H1 (cell line): ENCODE measurements at regions of chr13 and their contacts with region 1.

Region 1: DNA sequence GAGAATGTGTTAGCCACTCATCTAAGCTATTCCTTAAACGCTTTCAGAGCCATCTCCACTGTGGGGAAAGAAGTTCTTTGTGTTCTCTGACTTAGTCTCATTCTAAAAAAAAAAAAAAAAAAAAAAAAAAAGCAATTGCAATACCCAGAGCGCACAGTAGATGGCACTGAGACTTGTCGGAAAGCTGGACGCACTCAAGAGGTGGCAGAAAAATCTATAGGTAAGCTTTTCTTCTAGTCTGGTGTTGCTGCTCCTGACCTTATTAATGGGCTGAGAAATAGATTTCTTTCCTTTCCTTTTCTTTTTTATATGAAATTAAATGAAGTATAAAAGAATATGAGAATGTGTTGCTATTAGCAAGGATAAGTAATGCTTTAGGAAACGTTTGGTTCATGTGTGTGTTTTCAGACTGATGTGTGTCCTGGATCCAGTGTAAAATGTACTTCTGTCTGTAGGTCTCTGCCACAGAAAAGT is 4.7 kb upstream of the GJB2 start:
- DNase-seq: no peak
- H3K4me3 ChIP-seq: no peak overlapping the region
- H3K27ac ChIP-seq: no peak overlapping the region
- H3K4me1 ChIP-seq: peaks cover 0 to 9% (median 3%) of the 10 kb centered on the region in 4 experiments; a peak in 5 of 7 replicates
- H3K27me3 ChIP-seq: peaks cover 28 to 49% (median 45%) of the 10 kb centered on the region in 4 experiments
- CTCF ChIP-seq: peak; percentile 37 to 58 (median 53)
- EP300 ChIP-seq: no peak
- POLR2A ChIP-seq: no peak
- RAD21 ChIP-seq: peak; percentile 74 to 77

Region 2: GRCh38 chr13:20230913-20231838 is 33.8 kb after region 1 on chr13:
- CTCF ChIA-PET with region 1: interaction called, 20 read pairs
- POLR2A ChIA-PET with region 1: no interaction called
- DNase-seq: peak in 1 of 2 experiments; percentile 54
- H3K4me3 ChIP-seq: peak overlapping the region; percentile 16 to 61 (median 36); a peak in 7 of 8 replicates
- H3K27ac ChIP-seq: no peak overlapping the region
- H3K4me1 ChIP-seq: peaks cover 0 to 7% (median 2%) of the 10 kb centered on the region in 4 experiments; a peak in 4 of 7 replicates
- H3K27me3 ChIP-seq: peaks cover 30 to 55% (median 47%) of the 10 kb centered on the region in 4 experiments
- CTCF ChIP-seq: no peak
- EP300 ChIP-seq: no peak
- POLR2A ChIP-seq: no peak
- RAD21 ChIP-seq: no peak

Region 3: GRCh38 chr13:20294497-20294896 is 97.1 kb after region 1 on chr13:
- CTCF ChIA-PET with region 1: interaction called, 10 read pairs
- POLR2A ChIA-PET with region 1: no interaction called
- DNase-seq: no peak
- H3K4me3 ChIP-seq: no peak overlapping the region
- H3K27ac ChIP-seq: no peak overlapping the region
- H3K4me1 ChIP-seq: peaks cover 0 to 2% (median 0%) of the 10 kb centered on the region in 4 experiments; a peak in 1 of 7 replicates
- H3K27me3 ChIP-seq: no peaks in the 10 kb centered on the region
- CTCF ChIP-seq: peak; percentile 54 to 70 (median 65); a peak in 3 of 4 replicates
- EP300 ChIP-seq: no peak
- POLR2A ChIP-seq: no peak
- RAD21 ChIP-seq: peak; percentile 46 to 55

Region 4: DNA sequence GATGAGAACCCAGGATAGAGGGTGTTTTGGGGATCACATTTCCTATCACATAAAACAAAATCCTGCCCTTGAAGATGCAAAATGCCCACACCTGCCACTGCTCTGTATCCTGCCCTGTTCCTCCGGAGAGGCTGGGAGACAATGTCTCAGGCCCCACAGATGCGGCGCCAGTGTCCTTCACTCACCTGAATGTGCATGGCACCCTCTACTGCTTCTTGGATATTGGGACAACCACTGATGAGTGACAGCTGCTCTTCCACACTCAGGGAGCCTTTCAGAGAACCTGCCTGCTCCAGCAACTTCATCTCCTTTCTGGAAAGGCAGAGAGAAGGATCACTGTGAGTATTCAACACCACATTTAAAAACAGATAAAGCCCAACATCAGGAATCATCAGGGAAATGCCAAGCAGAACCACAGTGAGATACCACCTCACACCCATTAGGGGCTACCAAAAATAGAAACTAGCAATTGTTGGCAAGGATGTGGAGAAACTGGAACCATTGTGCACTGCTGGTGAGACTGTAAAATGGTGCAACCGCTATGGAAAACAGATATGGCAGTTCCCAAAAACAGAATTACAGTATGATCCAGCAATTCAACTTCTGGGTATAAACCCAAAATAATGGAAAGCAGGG is 291.9 kb after region 1 on chr13:
- CTCF ChIA-PET with region 1: interaction called, 23 read pairs
- POLR2A ChIA-PET with region 1: no interaction called
- DNase-seq: no peak
- H3K4me3 ChIP-seq: no peak overlapping the region
- H3K27ac ChIP-seq: no peak overlapping the region
- H3K4me1 ChIP-seq: no peaks in the 10 kb centered on the region; a peak in 1 of 7 replicates
- H3K27me3 ChIP-seq: no peaks in the 10 kb centered on the region
- CTCF ChIP-seq: peak; percentile 55 to 75 (median 71)
- EP300 ChIP-seq: no peak
- POLR2A ChIP-seq: no peak
- RAD21 ChIP-seq: peak; percentile 89 to 94